ENCODE measurements at regions of chr13 and their contacts with region 1.

Region 1: GRCh38 chr13:113816946-113817859 is 46.7 kb downstream of the GAS6 start:
- DNase-seq: peak; percentile 81 to 87
- ATAC-seq: peak; percentile 28 to 29
- H3K4me3 ChIP-seq: peak overlapping the region in 1 of 4 donors; percentile 13
- H3K27ac ChIP-seq: peak overlapping the region; percentile 68 to 97 (median 96)
- H3K4me1 ChIP-seq: peaks cover 33 to 37% of the 10 kb centered on the region in 2 donors
- H3K27me3 ChIP-seq: no peaks in the 10 kb centered on the region
- CTCF ChIP-seq: peak; percentile 90 to 93 (median 91)
- POLR2A ChIP-seq: no peak

Region 2: GRCh38 chr13:113410472-113411201 is 406.6 kb before region 1 on chr13:
- in situ Hi-C with region 1: no loop called
- intact Hi-C with region 1: loop called (anchors 10 kb)
- DNase-seq: peak; percentile 92 to 96
- ATAC-seq: peak; percentile 64 to 65
- H3K4me3 ChIP-seq: peak overlapping the region; percentile 54 to 76 (median 64)
- H3K27ac ChIP-seq: peak overlapping the region; percentile 99 to 100 (median 100)
- H3K4me1 ChIP-seq: peaks cover 55 to 56% of the 10 kb centered on the region in 2 donors
- H3K27me3 ChIP-seq: no peaks in the 10 kb centered on the region
- CTCF ChIP-seq: no peak
- POLR2A ChIP-seq: peak; percentile 76 to 85

Region 3: DNA sequence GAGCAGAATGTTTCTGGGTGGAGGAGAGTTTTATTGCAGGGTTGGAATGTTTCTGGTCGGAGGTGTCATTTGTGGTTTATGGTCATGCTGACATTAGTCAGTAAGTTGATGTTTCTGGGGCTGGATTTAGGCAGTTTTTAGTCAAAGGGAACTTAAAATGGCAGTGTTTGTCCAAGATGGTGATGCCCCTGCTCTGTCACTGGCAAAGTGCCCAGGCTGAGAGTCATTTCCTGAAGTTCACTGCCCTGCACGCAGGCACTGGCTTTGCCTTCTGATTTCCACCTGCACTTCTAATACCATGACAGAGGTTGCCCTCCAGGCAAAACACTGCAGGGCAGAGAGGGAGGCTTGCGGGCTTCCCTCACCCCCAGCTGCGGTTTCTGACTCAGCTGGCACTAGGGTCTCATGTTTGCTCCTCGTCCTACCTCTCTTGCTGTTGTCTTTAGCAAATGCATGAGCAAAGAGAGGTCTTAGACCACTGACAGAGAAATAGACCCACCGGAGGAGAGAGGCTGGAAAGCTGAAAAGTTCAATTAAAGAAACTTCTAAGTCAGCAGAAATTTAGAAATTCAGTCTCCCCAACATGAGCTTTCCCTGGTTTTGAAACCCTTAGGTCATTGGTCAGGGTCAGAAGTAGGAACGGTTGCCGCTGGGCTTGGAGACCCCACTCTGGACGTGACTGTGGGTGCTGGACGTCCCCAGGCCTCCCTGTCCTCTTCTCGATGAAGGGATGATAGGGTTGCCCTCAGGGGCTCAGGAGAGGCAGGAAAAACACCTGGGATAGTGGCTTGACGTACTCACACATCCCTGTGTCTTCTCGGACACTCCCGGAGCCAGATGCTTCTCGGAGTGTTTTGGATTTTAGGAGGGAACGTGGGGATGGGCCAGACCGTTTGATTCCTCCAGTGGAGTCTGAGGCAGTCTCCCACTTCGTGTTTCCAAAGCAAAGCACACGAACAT is 31.9 kb before region 1 on chr13:
- in situ Hi-C with region 1: no loop called
- intact Hi-C with region 1: no loop called
- DNase-seq: no peak
- ATAC-seq: no peak
- H3K4me3 ChIP-seq: no peak overlapping the region
- H3K27ac ChIP-seq: no peak overlapping the region
- H3K4me1 ChIP-seq: no peaks in the 10 kb centered on the region
- H3K27me3 ChIP-seq: peaks cover 0 to 4% (median 0%) of the 10 kb centered on the region in 3 donors
- CTCF ChIP-seq: no peak
- POLR2A ChIP-seq: no peak

Region 4: GRCh38 chr13:113854238-113855011 is 37.2 kb after region 1 on chr13:
- in situ Hi-C with region 1: no loop called
- intact Hi-C with region 1: loop called (anchors 1 kb)
- DNase-seq: peak in 1 of 2 donors; percentile 54
- ATAC-seq: peak in 1 of 2 donors; percentile 4
- H3K4me3 ChIP-seq: no peak overlapping the region
- H3K27ac ChIP-seq: peak overlapping the region; percentile 79 to 92 (median 83)
- H3K4me1 ChIP-seq: peaks cover 52 to 59% of the 10 kb centered on the region in 2 donors
- H3K27me3 ChIP-seq: no peaks in the 10 kb centered on the region
- CTCF ChIP-seq: no peak
- POLR2A ChIP-seq: no peak

Region 5: DNA sequence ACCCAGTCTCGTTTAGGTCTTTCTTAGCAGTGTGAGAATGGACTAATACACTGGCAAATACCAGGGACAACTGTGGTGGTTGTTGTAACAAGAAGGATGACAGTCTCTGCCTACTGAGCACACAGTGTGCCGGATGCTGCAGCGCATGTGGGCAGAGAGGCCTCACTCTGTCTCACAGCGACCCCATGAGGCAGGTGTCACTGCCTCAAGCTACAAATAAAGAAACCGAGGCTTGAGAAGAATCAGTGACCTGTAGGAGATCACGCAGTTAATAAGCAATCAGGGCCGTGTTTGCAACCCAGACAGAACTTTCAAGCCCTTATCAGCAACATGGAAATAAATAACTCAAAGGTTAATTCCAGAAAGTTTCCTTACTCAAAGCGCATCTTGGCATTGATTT is 87.2 kb after region 1 on chr13:
- in situ Hi-C with region 1: no loop called
- intact Hi-C with region 1: loop called (anchors 2 kb)
- DNase-seq: peak in 1 of 2 donors; percentile 55
- ATAC-seq: peak; percentile 92 to 96
- H3K4me3 ChIP-seq: no peak overlapping the region
- H3K27ac ChIP-seq: peak overlapping the region in 1 of 4 donors; percentile 26
- H3K4me1 ChIP-seq: peaks cover 0 to 10% of the 10 kb centered on the region in 2 donors
- H3K27me3 ChIP-seq: no peaks in the 10 kb centered on the region
- CTCF ChIP-seq: peak; percentile 53 to 77 (median 72)
- POLR2A ChIP-seq: no peak

Region 6: GRCh38 chr13:113951246-113951999 is 134.2 kb after region 1 on chr13:
- in situ Hi-C with region 1: no loop called
- intact Hi-C with region 1: loop called (anchors 1 kb)
- DNase-seq: peak; percentile 76 to 82
- ATAC-seq: peak; percentile 88 to 91
- H3K4me3 ChIP-seq: peak overlapping the region in 3 of 4 donors; percentile 1 to 51 (median 22)
- H3K27ac ChIP-seq: no peak overlapping the region
- H3K4me1 ChIP-seq: peaks cover 7 to 9% of the 10 kb centered on the region in 2 donors
- H3K27me3 ChIP-seq: no peaks in the 10 kb centered on the region
- CTCF ChIP-seq: peak; percentile 85 to 96 (median 87)
- POLR2A ChIP-seq: no peak

Measured in gastrocnemius medialis (tissue), 4 donors.